ENCODE measurements at regions of chr14 and their contacts with region 1.

Region 1: DNA sequence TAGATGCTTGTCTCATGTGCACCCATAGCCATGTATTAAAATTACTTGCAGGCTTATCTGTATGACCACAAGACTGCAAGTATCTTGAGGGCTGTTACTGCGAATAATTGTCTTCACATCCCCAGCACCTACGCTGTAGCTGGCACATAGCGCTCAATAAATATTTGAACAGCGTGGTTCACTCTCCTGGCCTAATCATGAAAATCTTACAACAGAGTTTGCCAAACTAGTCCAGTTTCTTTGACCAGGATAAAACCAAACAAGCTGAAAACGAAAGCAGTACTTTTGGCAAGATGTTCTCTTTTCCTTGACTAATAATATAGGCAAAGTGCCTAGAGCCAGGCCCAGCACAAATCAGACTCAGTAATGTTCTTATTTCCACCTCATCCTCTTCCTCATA is 106.7 kb downstream of the RPS29 start:
- DNase-seq: no peak
- ATAC-seq: no peak
- H3K4me3 ChIP-seq: no peak overlapping the region
- H3K27ac ChIP-seq: no peak overlapping the region
- H3K4me1 ChIP-seq: no peaks in the 10 kb centered on the region
- H3K27me3 ChIP-seq: no peaks in the 10 kb centered on the region
- CTCF ChIP-seq: no peak
- POLR2A ChIP-seq: no peak

Region 2: GRCh38 chr14:48805315-48805714 is 674.1 kb before region 1 on chr14:
- intact Hi-C with region 1: no loop called
- DNase-seq: no peak
- ATAC-seq: no peak
- H3K4me3 ChIP-seq: no peak overlapping the region
- H3K27ac ChIP-seq: no peak overlapping the region
- H3K4me1 ChIP-seq: no peaks in the 10 kb centered on the region
- H3K27me3 ChIP-seq: no peaks in the 10 kb centered on the region
- CTCF ChIP-seq: no peak
- POLR2A ChIP-seq: no peak

Region 3: DNA sequence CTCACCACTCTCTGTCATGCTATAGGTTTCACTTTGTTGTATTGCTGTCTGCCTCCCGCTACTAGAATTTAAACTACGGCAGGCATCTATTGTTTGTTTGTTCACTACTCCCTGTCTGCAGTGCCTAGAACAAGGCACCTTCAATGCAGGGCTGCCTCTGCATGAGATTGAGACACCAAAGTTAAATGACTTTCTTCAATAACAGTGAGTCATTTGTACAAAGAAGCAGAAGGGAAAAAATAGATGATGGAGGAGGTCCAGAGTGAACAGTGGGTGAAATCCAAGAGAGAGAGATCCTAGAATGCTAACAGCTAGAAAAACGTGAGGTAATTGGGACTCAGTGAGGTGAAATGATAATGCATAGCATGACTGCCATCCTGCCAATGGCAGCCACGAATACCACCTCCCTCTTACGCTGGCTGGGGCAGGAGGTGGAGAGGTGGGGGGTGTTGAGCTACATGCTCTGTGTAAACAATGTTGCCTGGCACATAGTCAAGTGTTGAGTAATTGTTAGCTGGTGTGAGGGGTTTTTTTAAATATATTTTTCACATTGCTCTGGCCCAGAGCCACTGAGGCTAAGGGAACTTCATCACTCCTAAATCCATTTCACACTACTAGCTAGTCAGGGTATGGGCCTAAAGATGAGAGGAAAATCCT is 260.9 kb before region 1 on chr14:
- intact Hi-C with region 1: loop called in 1 of 10 experiments (anchors 10 kb)
- DNase-seq: no peak
- ATAC-seq: peak in 1 of 4 donors; percentile 31
- H3K4me3 ChIP-seq: no peak overlapping the region
- H3K27ac ChIP-seq: no peak overlapping the region
- H3K4me1 ChIP-seq: no peaks in the 10 kb centered on the region
- H3K27me3 ChIP-seq: no peaks in the 10 kb centered on the region
- CTCF ChIP-seq: no peak
- POLR2A ChIP-seq: no peak

Measured in heart left ventricle (tissue), 16 donors.